Activated CD8-positive, alpha-beta T cell treated with anti-CD3 and anti-CD28 coated beads for 36 hours (primary cell): ENCODE measurements at regions of chr10 and their contacts with region 1.

Region 1: GRCh38 chr10:11178606-11179515 is 161.2 kb downstream of the CELF2 start:
- DNase-seq: peak; percentile 94
- ATAC-seq: peak; percentile 71
- H3K4me3 Mint-ChIP-seq: no peak overlapping the region
- H3K27ac Mint-ChIP-seq: no peak overlapping the region
- H3K4me1 Mint-ChIP-seq: peaks cover 89% of the 10 kb centered on the region
- H3K27me3 Mint-ChIP-seq: no peaks in the 10 kb centered on the region
- CTCF ChIP-seq: no peak

Region 2: DNA sequence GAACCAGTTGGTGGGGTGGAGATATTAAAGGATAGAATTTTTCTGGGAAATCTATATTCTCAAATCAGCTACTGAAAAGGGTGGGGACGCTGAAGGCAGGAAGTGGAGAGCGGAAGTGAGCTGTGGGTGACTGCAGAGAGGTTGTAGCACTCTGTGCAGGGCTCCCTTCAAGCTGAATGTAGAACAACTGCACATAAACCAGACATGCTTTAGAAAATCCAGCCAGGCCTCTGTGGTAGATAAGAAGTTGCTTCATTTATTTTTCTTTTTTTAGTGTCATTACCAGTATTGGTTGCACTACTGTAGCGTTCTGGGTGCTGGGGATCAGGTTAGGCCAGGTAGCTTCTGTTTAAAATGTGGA is 33.4 kb before region 1 on chr10:
- CTCF ChIA-PET with region 1: interaction called, 3 read pairs
- POLR2A ChIA-PET with region 1: interaction called, 39 read pairs
- intact Hi-C with region 1: loop called (anchors 5 kb)
- DNase-seq: peak; percentile 79
- ATAC-seq: peak; percentile 63
- H3K4me3 Mint-ChIP-seq: peak overlapping the region; percentile 74
- H3K27ac Mint-ChIP-seq: peak overlapping the region; percentile 93
- H3K4me1 Mint-ChIP-seq: peaks cover 86% of the 10 kb centered on the region
- H3K27me3 Mint-ChIP-seq: no peaks in the 10 kb centered on the region
- CTCF ChIP-seq: no peak

Region 3: GRCh38 chr10:11192304-11193000 is 13.6 kb after region 1 on chr10:
- CTCF ChIA-PET with region 1: interaction called, 4 read pairs
- POLR2A ChIA-PET with region 1: interaction called, 16 read pairs
- intact Hi-C with region 1: no loop called
- DNase-seq: no peak
- ATAC-seq: no peak
- H3K4me3 Mint-ChIP-seq: no peak overlapping the region
- H3K27ac Mint-ChIP-seq: peak overlapping the region; percentile 89
- H3K4me1 Mint-ChIP-seq: peaks cover 93% of the 10 kb centered on the region
- H3K27me3 Mint-ChIP-seq: no peaks in the 10 kb centered on the region
- CTCF ChIP-seq: no peak

Region 4: DNA sequence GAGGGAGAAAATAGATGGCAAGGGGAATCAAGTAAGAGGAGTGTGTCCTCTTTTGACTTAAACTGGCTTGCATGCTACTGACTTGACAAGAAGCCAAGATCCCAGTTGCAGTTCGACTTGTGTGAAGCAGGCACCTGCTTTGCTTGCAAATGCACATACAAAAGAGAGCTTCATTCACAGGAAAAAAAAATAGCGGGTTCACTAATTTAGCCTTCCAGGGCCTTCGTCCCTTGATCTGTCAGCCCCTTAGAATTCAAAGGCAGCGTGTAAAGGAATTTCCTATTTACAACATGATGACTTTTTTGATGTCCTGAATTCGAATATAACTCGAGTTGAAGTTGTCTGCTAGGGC is 30.9 kb after region 1 on chr10:
- CTCF ChIA-PET with region 1: interaction called, 14 read pairs
- POLR2A ChIA-PET with region 1: interaction called, 105 read pairs
- intact Hi-C with region 1: loop called (anchors 1 kb)
- DNase-seq: no peak
- ATAC-seq: peak; percentile 4
- H3K4me3 Mint-ChIP-seq: peak overlapping the region; percentile 72
- H3K27ac Mint-ChIP-seq: peak overlapping the region; percentile 97
- H3K4me1 Mint-ChIP-seq: peaks cover 98% of the 10 kb centered on the region
- H3K27me3 Mint-ChIP-seq: no peaks in the 10 kb centered on the region
- CTCF ChIP-seq: no peak

Region 5: GRCh38 chr10:11236234-11236633 is 57.4 kb after region 1 on chr10:
- CTCF ChIA-PET with region 1: interaction called, 6 read pairs
- POLR2A ChIA-PET with region 1: interaction called, 59 read pairs
- intact Hi-C with region 1: loop called (anchors 2 kb)
- DNase-seq: peak; percentile 57
- ATAC-seq: peak; percentile 48
- H3K4me3 Mint-ChIP-seq: peak overlapping the region; percentile 20
- H3K27ac Mint-ChIP-seq: peak overlapping the region; percentile 92
- H3K4me1 Mint-ChIP-seq: peaks cover 95% of the 10 kb centered on the region
- H3K27me3 Mint-ChIP-seq: no peaks in the 10 kb centered on the region
- CTCF ChIP-seq: no peak